Dendritic cell treated with granulocyte-macrophage colony-stimulating factor and Interleukin-4, amounts not matched to agents 40 ng/mL and 50 ng/mL, for 4 days (primary cell): ENCODE measurements at regions of chr22 and their contacts with region 1.

Region 1: GRCh38 chr22:43014869-43015676 is at the start of gene PACSIN2:
- H3K4me3 Mint-ChIP-seq: peak within 1 kb of the TSS; percentile 93
- H3K27ac Mint-ChIP-seq: peak within 1 kb of the TSS; percentile 93
- H3K4me1 Mint-ChIP-seq: peaks cover 41% of the 10 kb centered on the region
- H3K27me3 Mint-ChIP-seq: peaks cover 3% of the 10 kb centered on the region

Region 2: GRCh38 chr22:43001271-43002201 is 13.5 kb before region 1 on chr22:
- intact Hi-C with region 1: loop called (anchors 2 kb)
- H3K4me3 Mint-ChIP-seq: peak overlapping the region; percentile 41
- H3K27ac Mint-ChIP-seq: peak overlapping the region; percentile 97
- H3K4me1 Mint-ChIP-seq: peaks cover 96% of the 10 kb centered on the region
- H3K27me3 Mint-ChIP-seq: no peaks in the 10 kb centered on the region